ENCODE measurements at regions of chr16 and their contacts with region 1.

Region 1: GRCh38 chr16:79767421-79768275 is 167.1 kb upstream of the MAF start:
- DNase-seq: no peak
- H3K4me3 ChIP-seq: peak overlapping the region; percentile 1 to 44 (median 36)
- H3K27ac ChIP-seq: peak overlapping the region; percentile 80 to 86 (median 83)
- H3K4me1 ChIP-seq: peaks cover 0 to 50% (median 40%) of the 10 kb centered on the region in 4 donors
- H3K27me3 ChIP-seq: no peaks in the 10 kb centered on the region
- CTCF ChIP-seq: peak in 1 of 4 experiments; percentile 35
- EP300 ChIP-seq: no peak
- POLR2A ChIP-seq: no peak

Region 2: GRCh38 chr16:79735271-79735670 is 32.4 kb before region 1 on chr16:
- intact Hi-C with region 1: no loop called
- DNase-seq: no peak
- H3K4me3 ChIP-seq: no peak overlapping the region
- H3K27ac ChIP-seq: no peak overlapping the region
- H3K4me1 ChIP-seq: no peaks in the 10 kb centered on the region
- H3K27me3 ChIP-seq: no peaks in the 10 kb centered on the region
- CTCF ChIP-seq: no peak
- EP300 ChIP-seq: no peak
- POLR2A ChIP-seq: no peak

Region 3: DNA sequence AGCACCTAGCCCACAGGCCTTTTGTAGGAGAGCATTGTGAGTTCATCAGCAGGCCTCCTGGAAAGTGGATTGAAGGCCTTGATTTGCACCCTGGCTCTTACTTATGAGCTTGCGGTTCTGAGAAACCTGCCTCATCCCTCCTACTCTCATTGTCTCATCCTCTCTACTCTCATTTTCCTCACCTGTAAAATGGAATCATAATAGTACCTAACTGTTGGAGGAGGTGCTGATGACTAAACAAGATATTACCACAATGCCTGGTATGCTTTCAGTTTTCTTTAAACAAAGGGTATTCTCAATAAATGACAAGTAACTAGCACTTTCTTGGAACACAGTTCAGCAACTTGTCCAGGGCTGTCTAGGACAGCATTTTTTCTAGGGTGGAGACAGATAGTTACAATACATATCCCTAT is 76.0 kb after region 1 on chr16:
- intact Hi-C with region 1: loop called (anchors 5 kb)
- DNase-seq: no peak
- H3K4me3 ChIP-seq: no peak overlapping the region
- H3K27ac ChIP-seq: no peak overlapping the region
- H3K4me1 ChIP-seq: peaks cover 3 to 35% (median 32%) of the 10 kb centered on the region in 4 donors
- H3K27me3 ChIP-seq: no peaks in the 10 kb centered on the region
- CTCF ChIP-seq: no peak
- EP300 ChIP-seq: no peak
- POLR2A ChIP-seq: no peak

Region 4: DNA sequence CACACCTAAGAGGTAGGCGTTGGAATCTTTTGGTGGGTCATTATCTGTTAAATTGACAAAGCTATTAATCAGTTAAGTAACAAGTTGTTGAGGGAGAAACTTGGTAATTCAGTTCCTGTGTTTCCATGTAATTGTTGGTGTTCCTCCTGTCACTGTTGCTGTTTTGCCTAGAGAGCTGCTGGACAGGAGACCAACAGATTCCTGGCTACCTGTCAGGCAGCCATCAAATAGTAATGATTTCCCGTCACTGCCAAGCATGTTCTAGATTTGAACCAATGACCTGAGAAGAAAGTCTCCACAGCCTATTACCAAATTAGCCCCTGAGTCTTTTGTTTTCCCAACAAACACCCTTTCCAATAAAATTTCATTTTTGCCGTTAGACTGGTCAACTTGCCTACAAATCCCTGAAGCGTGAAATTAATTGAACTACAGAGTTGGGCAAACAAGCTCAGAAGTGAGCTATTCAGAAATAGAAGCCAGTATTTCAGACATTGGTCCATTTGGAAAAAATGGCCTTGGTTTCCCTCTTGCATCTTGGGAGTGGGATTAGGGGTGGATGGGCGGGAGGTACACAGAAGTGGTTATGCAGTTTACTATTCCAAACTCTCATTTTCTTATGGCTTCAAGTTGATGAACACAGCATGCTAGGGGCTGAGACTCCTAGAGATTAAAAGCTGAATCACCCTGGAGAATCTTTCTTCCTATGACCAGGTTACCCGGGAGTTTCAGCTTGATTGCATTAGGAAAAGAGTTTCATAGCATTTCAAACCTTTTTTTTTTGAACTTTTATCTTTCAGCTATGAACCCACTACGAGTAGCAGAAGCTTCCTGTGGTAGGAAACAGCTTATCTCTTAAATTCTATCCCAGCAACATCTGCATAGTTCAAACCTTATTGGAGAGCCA is 95.7 kb after region 1 on chr16:
- intact Hi-C with region 1: no loop called
- DNase-seq: no peak
- H3K4me3 ChIP-seq: no peak overlapping the region
- H3K27ac ChIP-seq: no peak overlapping the region
- H3K4me1 ChIP-seq: no peaks in the 10 kb centered on the region
- H3K27me3 ChIP-seq: no peaks in the 10 kb centered on the region
- CTCF ChIP-seq: no peak
- EP300 ChIP-seq: no peak
- POLR2A ChIP-seq: no peak

Region 5: GRCh38 chr16:79928142-79928873 is 160.7 kb after region 1 on chr16:
- intact Hi-C with region 1: loop called (anchors 5 kb)
- DNase-seq: no peak
- H3K4me3 ChIP-seq: no peak overlapping the region
- H3K27ac ChIP-seq: peak overlapping the region in 1 of 4 donors; percentile 69
- H3K4me1 ChIP-seq: peaks cover 0 to 31% (median 23%) of the 10 kb centered on the region in 4 donors
- H3K27me3 ChIP-seq: no peaks in the 10 kb centered on the region
- CTCF ChIP-seq: no peak
- EP300 ChIP-seq: no peak
- POLR2A ChIP-seq: no peak

Region 6: DNA sequence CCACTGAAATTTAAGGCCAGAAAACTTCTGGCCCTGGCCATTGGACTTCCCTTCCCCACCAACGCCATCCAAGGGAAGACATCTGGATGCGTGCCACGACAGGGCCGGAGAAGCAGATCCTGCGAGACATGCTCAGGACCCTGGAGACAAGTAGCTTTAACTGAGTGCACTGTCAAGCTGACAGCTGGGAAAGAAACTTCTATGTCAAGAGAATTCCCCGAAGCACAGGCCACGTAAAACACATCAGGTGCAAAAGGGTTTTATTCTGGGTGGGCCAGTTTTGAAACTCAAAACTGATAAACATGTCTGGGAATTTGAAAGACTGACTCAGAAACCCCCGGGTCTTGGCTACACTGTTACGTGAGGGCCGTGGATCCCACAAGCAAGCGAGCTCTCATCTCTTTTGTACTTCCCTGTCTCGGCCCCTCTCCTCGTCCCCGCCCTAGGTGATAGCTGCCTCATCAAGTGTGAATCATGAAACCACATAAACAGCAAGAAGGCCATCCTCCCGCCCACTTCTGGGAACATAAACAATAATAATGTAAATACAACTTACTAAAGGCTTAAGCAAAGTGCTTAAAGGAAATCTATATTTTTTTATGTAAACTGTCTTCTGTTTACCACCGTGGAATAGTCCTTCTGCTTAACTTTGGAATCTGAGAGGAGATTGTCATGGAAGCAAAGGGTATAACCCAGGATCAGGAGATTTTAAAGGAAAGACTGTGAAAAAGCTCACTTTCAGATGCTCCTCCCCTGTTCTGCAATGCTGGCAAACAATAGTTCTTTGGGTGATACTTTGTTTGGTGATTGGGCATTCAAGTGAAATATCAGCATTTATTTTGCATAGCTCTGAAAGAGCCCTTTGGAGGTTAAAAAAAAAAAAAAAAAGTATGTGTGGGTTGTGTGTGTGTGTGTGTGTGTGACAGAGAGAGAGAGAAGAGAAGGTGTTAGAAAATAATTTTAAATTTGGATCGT is 238.9 kb after region 1 on chr16:
- intact Hi-C with region 1: no loop called
- DNase-seq: no peak
- H3K4me3 ChIP-seq: no peak overlapping the region
- H3K27ac ChIP-seq: peak overlapping the region in 1 of 4 donors; percentile 40
- H3K4me1 ChIP-seq: peaks cover 0 to 20% (median 17%) of the 10 kb centered on the region in 4 donors
- H3K27me3 ChIP-seq: no peaks in the 10 kb centered on the region
- CTCF ChIP-seq: no peak
- EP300 ChIP-seq: no peak
- POLR2A ChIP-seq: no peak

Region 7: DNA sequence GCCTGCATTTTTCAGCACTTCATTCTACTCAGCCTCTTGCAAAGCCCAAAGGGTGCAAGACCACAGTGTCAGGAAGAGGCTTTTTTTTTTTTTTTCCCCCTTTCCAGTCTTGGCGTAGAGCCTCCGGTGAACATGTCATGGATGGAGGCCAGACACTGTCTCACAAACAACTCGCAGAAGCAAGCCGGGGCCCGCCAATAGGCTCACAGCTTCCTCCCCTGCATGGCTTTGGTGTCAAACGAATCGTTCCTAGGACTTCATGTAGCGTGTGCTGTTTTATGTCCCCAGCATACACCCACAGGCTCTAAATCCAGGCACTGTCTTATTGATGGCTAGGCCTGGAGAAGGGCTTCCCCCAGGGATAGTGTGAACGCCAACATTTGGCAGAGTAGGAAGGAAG is 290.6 kb after region 1 on chr16:
- intact Hi-C with region 1: loop called (anchors 5 kb)
- DNase-seq: peak; percentile 89
- H3K4me3 ChIP-seq: no peak overlapping the region
- H3K27ac ChIP-seq: peak overlapping the region in 3 of 4 donors; percentile 46 to 61 (median 53)
- H3K4me1 ChIP-seq: peaks cover 0 to 23% (median 18%) of the 10 kb centered on the region in 4 donors
- H3K27me3 ChIP-seq: no peaks in the 10 kb centered on the region
- CTCF ChIP-seq: no peak
- EP300 ChIP-seq: no peak
- POLR2A ChIP-seq: no peak

Region 8: DNA sequence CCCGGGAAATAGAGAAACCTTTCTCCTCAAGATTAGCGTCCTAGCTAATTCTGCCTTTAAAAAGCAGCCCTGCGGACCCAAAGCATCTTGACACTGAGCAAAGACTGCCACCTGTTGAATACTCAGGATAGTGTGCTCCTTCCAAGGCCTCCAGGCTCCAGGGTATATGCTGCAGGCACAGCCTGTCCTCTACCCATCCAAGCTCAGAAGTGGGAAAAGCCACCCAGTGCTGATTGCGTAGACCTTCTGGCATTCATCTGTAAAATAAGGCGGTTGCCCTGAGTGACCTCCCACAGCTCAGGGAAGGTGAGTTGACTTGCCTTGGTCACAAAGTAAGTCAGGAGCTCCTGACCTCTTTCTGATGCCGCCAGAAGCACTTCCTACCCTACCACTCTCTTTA is 317.0 kb after region 1 on chr16:
- intact Hi-C with region 1: loop called (anchors 2 kb)
- DNase-seq: peak; percentile 82
- H3K4me3 ChIP-seq: no peak overlapping the region
- H3K27ac ChIP-seq: no peak overlapping the region
- H3K4me1 ChIP-seq: peaks cover 0 to 6% (median 2%) of the 10 kb centered on the region in 4 donors
- H3K27me3 ChIP-seq: no peaks in the 10 kb centered on the region
- CTCF ChIP-seq: peak in 3 of 4 experiments; percentile 54 to 74 (median 73)
- EP300 ChIP-seq: no peak
- POLR2A ChIP-seq: no peak

Measured in sigmoid colon (tissue), 7 donors.